OCI-LY7 (cell line): ENCODE measurements at regions of chr18 and their contacts with region 1.

Region 1: GRCh38 chr18:35747894-35748472 is 166.4 kb downstream of the GALNT1 start:
- DNase-seq: peak; percentile 9
- H3K4me3 ChIP-seq: no peak overlapping the region
- H3K27ac ChIP-seq: no peak overlapping the region
- H3K4me1 ChIP-seq: no peaks in the 10 kb centered on the region
- CTCF ChIP-seq: no peak

Region 2: DNA sequence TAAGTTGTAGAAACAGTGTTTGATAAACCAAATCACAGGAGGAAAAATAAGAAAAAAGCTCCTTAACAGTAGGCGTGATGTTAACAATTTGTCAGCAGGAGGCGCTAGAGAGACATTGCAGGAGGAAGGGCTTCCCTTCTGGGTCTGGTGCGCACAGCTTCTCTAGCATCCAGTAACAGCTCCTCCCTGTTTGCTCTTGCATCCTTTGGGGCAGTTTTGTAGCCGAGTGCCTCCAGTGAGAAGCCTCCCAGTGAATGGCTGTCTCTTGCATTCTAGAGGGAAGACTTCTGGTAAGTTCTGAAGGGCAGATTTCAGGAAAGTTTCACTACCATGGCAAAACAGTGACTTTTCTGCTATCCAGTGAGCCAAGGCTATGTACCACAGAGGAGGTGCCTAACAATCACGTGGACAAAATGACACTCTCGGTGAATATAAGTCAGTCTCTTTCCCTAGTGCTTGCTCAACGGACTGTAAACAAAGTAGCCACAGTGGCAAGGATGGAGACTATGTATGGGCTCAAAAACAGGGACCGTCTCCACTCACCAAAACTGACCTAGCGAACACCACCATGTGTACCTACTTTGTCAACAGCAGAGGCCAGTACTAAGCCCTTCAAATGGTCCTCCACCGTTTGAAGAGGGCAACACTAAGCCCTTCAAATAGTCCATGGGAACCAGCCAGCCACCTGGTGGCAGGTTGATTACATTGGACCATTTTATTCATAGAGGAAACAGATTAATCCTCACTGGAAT is 361.2 kb before region 1 on chr18:
- CTCF ChIA-PET with region 1: interaction called, 3 read pairs
- POLR2A ChIA-PET with region 1: no interaction called
- intact Hi-C with region 1: loop called (anchors 10 kb)
- DNase-seq: peak; percentile 71
- H3K4me3 ChIP-seq: no peak overlapping the region
- H3K27ac ChIP-seq: no peak overlapping the region
- H3K4me1 ChIP-seq: peaks cover 5% of the 10 kb centered on the region
- CTCF ChIP-seq: peak; percentile 80

Region 3: GRCh38 chr18:35835833-35836232 is 87.8 kb after region 1 on chr18:
- CTCF ChIA-PET with region 1: no interaction called
- POLR2A ChIA-PET with region 1: no interaction called
- intact Hi-C with region 1: no loop called
- DNase-seq: no peak
- H3K4me3 ChIP-seq: no peak overlapping the region
- H3K27ac ChIP-seq: no peak overlapping the region
- H3K4me1 ChIP-seq: peaks cover 17% of the 10 kb centered on the region
- CTCF ChIP-seq: no peak